ENCODE measurements at regions of chr15 and their contacts with region 1.

Region 1: GRCh38 chr15:82849556-82850512 is 40.4 kb downstream of the WHAMM start:
- DNase-seq: peak; percentile 76 to 88 (median 83)
- ATAC-seq: peak; percentile 93 to 97 (median 94)
- H3K4me3 ChIP-seq: peak overlapping the region in 7 of 12 donors; percentile 16 to 29 (median 21)
- H3K27ac ChIP-seq: peak overlapping the region in 5 of 12 donors; percentile 32 to 55 (median 42)
- H3K4me1 ChIP-seq: peaks cover 0 to 16% (median 11%) of the 10 kb centered on the region in 12 donors
- H3K27me3 ChIP-seq: no peaks in the 10 kb centered on the region
- CTCF ChIP-seq: peak; percentile 58 to 89 (median 72)
- POLR2A ChIP-seq: no peak

Region 2: GRCh38 chr15:82985688-82986441 is 136.0 kb after region 1 on chr15 and contains the start of gene RAMAC:
- intact Hi-C with region 1: loop called in 7 of 10 experiments (anchors 5 to 10 kb)
- DNase-seq: peak; percentile 91 to 96 (median 93)
- ATAC-seq: peak; percentile 89 to 98 (median 98)
- H3K4me3 ChIP-seq: peak within 1 kb of the TSS; percentile 53 to 98 (median 79)
- H3K27ac ChIP-seq: peak within 1 kb of the TSS; percentile 21 to 87 (median 78)
- H3K4me1 ChIP-seq: peaks cover 0 to 20% (median 15%) of the 10 kb centered on the region in 12 donors
- H3K27me3 ChIP-seq: no peaks in the 10 kb centered on the region
- CTCF ChIP-seq: no peak
- POLR2A ChIP-seq: peak in 1 of 2 donors; percentile 49
- total RNA-seq, gene RAMAC: 11.0 to 17.0 (median 14.9) TPM

Region 3: GRCh38 chr15:82999905-83000671 is 150.3 kb after region 1 on chr15:
- intact Hi-C with region 1: loop called (anchors 1 to 5 kb)
- DNase-seq: no peak
- ATAC-seq: peak; percentile 37 to 86 (median 80)
- H3K4me3 ChIP-seq: peak overlapping the region in 7 of 12 donors; percentile 18 to 44 (median 35)
- H3K27ac ChIP-seq: peak overlapping the region in 1 of 12 donors; percentile 27
- H3K4me1 ChIP-seq: peaks cover 0 to 11% (median 4%) of the 10 kb centered on the region in 12 donors
- H3K27me3 ChIP-seq: no peaks in the 10 kb centered on the region
- CTCF ChIP-seq: peak; percentile 22 to 67 (median 46)
- POLR2A ChIP-seq: no peak

Measured in heart left ventricle (tissue), 16 donors.